MCF 10A (cell line): ENCODE measurements at regions of chr7 and their contacts with region 1.

Region 1: GRCh38 chr7:131327626-131328376 is at the start of gene MKLN1:
- DNase-seq: peak; percentile 89
- H3K4me3 Mint-ChIP-seq: peak within 1 kb of the TSS; percentile 85
- H3K27ac Mint-ChIP-seq: peak within 1 kb of the TSS; percentile 99
- H3K4me1 Mint-ChIP-seq: peaks cover 16% of the 10 kb centered on the region
- H3K27me3 Mint-ChIP-seq: no peaks in the 10 kb centered on the region
- CTCF ChIP-seq: no peak
- total RNA-seq, gene MKLN1: 35.6 and 35.8 TPM in 2 replicates

Region 2: GRCh38 chr7:130393101-130393561 is 934.7 kb before region 1 on chr7:
- CTCF ChIA-PET with region 1: no interaction called
- POLR2A ChIA-PET with region 1: no interaction called
- intact Hi-C with region 1: no loop called
- DNase-seq: no peak
- H3K4me3 Mint-ChIP-seq: no peak overlapping the region
- H3K27ac Mint-ChIP-seq: no peak overlapping the region
- H3K4me1 Mint-ChIP-seq: no peaks in the 10 kb centered on the region
- H3K27me3 Mint-ChIP-seq: no peaks in the 10 kb centered on the region
- CTCF ChIP-seq: no peak

Region 3: GRCh38 chr7:131164025-131164899 is 163.5 kb before region 1 on chr7:
- CTCF ChIA-PET with region 1: no interaction called
- POLR2A ChIA-PET with region 1: interaction called, 17 read pairs
- intact Hi-C with region 1: loop called (anchors 5 kb)
- DNase-seq: peak; percentile 92
- H3K4me3 Mint-ChIP-seq: peak overlapping the region; percentile 65
- H3K27ac Mint-ChIP-seq: peak overlapping the region; percentile 97
- H3K4me1 Mint-ChIP-seq: peaks cover 28% of the 10 kb centered on the region
- H3K27me3 Mint-ChIP-seq: no peaks in the 10 kb centered on the region
- CTCF ChIP-seq: no peak

Region 4: GRCh38 chr7:131342864-131343442 is 15.2 kb after region 1 on chr7:
- CTCF ChIA-PET with region 1: interaction called, 5 read pairs
- POLR2A ChIA-PET with region 1: interaction called, 16 read pairs
- intact Hi-C with region 1: no loop called
- DNase-seq: no peak
- H3K4me3 Mint-ChIP-seq: no peak overlapping the region
- H3K27ac Mint-ChIP-seq: no peak overlapping the region
- H3K4me1 Mint-ChIP-seq: peaks cover 13% of the 10 kb centered on the region
- H3K27me3 Mint-ChIP-seq: no peaks in the 10 kb centered on the region
- CTCF ChIP-seq: no peak

Region 5: DNA sequence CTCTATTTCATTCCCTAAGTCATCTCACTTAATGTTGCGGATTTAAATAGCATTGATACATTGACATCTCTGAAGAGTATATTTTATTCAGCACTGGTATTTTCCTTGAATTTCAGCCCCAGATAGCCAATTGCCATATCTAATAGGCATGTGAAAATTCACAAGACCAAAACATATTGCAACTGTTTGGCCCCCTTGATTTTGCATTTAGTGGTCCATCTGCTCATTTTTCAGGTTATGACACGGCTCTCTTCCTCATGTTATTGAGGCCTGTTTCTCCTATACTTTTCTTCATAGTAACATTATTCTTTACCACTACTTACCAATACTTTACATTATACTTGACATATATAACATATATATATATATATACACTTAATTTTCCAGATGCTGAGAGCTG is 43.6 kb after region 1 on chr7:
- CTCF ChIA-PET with region 1: no interaction called
- POLR2A ChIA-PET with region 1: interaction called, 10 read pairs
- intact Hi-C with region 1: no loop called
- DNase-seq: no peak
- H3K4me3 Mint-ChIP-seq: no peak overlapping the region
- H3K27ac Mint-ChIP-seq: no peak overlapping the region
- H3K4me1 Mint-ChIP-seq: peaks cover 33% of the 10 kb centered on the region
- H3K27me3 Mint-ChIP-seq: no peaks in the 10 kb centered on the region
- CTCF ChIP-seq: no peak

Region 6: DNA sequence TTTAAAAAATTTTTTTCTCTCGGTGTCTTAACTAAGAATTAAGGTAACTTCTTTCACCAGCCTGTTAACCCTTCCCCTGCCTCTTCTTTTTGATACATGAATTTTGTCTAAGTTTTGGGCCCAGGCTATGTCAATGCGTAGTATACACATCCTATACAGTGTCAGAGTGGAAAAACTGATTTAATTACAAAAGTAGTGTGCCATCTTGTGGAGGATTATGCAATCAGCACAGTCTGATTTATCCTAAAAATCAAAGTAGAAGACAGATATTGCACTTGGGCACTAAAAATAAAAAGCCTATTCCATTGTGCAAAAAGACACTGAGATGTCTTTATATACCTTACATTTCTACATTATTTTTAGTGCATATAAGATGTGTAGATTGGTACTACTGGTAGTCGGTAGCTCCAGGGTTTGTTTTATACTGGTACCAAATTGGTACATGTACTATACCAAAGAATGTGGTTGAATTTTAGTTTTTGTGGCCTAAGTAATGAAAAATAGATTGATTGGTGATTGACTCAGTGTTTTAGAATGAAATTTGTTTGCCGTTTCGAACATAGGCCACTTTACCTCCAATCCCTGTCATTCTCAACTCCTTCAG is 96.5 kb after region 1 on chr7:
- CTCF ChIA-PET with region 1: no interaction called
- POLR2A ChIA-PET with region 1: interaction called, 7 read pairs
- intact Hi-C with region 1: loop called (anchors 2 kb)
- DNase-seq: peak; percentile 39
- H3K4me3 Mint-ChIP-seq: no peak overlapping the region
- H3K27ac Mint-ChIP-seq: no peak overlapping the region
- H3K4me1 Mint-ChIP-seq: peaks cover 6% of the 10 kb centered on the region
- H3K27me3 Mint-ChIP-seq: no peaks in the 10 kb centered on the region
- CTCF ChIP-seq: peak; percentile 60